ENCODE measurements at regions of chr1 and their contacts with region 1.

Region 1: DNA sequence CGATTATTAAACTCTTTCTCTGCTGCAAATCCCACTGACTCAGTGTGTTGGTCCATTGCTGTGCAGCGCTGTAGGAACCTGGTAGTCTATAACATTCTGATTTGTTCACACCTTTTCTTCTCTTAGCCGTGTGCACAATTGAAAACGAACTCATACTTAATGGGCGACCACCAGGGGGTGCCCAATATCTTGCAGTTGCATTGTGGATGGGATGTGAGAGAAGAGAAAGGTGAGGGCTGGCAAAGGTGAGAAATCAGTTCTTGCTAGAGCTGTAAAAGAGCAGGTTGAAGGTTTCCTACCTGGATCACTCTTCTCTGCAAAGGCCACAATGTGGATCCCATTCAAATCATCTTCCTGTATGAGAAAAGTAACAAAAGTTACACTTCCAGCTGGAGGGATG is 51.0 kb downstream of the CASQ2 start:
- DNase-seq: peak; percentile 15
- ATAC-seq: no peak
- H3K4me3 ChIP-seq: no peak overlapping the region
- H3K27ac ChIP-seq: no peak overlapping the region
- H3K4me1 ChIP-seq: no peaks in the 10 kb centered on the region
- H3K27me3 ChIP-seq: peaks cover 28% of the 10 kb centered on the region
- CTCF ChIP-seq: peak; percentile 35
- POLR2A ChIP-seq: no peak
- RAD21 ChIP-seq: 0 out of 2 replicates have a peak, but pooled peaks have one; percentile 26

Region 2: GRCh38 chr1:115771847-115772457 is 54.4 kb after region 1 on chr1:
- CTCF ChIA-PET with region 1: interaction called, 7 read pairs
- POLR2A ChIA-PET with region 1: no interaction called
- dilution Hi-C with region 1: no loop called
- in situ Hi-C with region 1: no loop called
- intact Hi-C with region 1: loop called (anchors 1 kb)
- DNase-seq: peak; percentile 80
- ATAC-seq: peak; percentile 99
- H3K4me3 ChIP-seq: no peak overlapping the region
- H3K27ac ChIP-seq: no peak overlapping the region
- H3K4me1 ChIP-seq: no peaks in the 10 kb centered on the region
- H3K27me3 ChIP-seq: peaks cover 8% of the 10 kb centered on the region
- CTCF ChIP-seq: peak; percentile 90
- POLR2A ChIP-seq: no peak
- RAD21 ChIP-seq: peak; percentile 85

Region 3: DNA sequence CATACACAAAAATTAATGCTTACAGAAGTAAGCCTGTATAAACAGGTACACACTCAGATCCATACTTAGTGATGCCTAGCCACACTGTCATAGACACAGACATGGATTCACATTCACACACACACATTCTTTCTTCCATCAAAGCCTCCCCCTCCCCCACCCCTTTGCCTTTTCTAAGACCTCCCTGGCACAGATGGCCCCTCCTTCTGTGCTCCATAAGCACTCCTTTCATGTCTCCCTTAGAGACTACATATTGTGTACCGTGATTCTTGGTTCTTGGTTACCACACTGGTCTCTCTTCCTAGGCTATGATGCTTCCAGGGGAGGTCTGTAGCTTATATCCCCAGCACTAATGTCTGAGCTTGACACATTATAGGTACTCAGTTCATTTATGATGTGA is 125.4 kb after region 1 on chr1:
- CTCF ChIA-PET with region 1: no interaction called
- POLR2A ChIA-PET with region 1: no interaction called
- dilution Hi-C with region 1: no loop called
- in situ Hi-C with region 1: no loop called
- intact Hi-C with region 1: no loop called
- DNase-seq: no peak
- ATAC-seq: no peak
- H3K4me3 ChIP-seq: no peak overlapping the region
- H3K27ac ChIP-seq: no peak overlapping the region
- H3K4me1 ChIP-seq: peaks cover 2% of the 10 kb centered on the region; the same call in 1 of the 2 replicates
- H3K27me3 ChIP-seq: peaks cover 40% of the 10 kb centered on the region
- CTCF ChIP-seq: no peak
- POLR2A ChIP-seq: no peak
- RAD21 ChIP-seq: no peak

Region 4: DNA sequence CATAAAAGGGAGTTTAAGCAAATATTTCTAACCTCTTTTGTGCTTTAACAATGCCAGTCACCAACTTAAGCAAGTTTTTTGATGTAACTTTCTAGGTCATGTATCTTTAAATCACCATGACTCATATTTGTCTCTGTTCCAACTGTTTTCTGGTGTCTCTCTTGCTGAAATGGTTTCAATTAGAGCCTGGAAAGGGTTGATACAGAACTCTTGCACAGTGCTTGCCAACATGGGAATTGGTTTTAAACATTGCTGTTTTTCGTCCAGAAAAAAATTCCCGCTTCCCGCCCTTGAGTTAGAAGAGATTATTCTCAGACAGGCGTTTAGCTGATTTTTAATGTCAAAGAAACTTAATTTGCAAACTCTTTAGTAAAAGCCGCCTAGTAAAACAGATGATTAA is 212.3 kb after region 1 on chr1:
- CTCF ChIA-PET with region 1: no interaction called
- POLR2A ChIA-PET with region 1: no interaction called
- dilution Hi-C with region 1: no loop called
- in situ Hi-C with region 1: no loop called
- intact Hi-C with region 1: no loop called
- DNase-seq: peak; percentile 30
- ATAC-seq: no peak
- H3K4me3 ChIP-seq: no peak overlapping the region
- H3K27ac ChIP-seq: no peak overlapping the region
- H3K4me1 ChIP-seq: no peaks in the 10 kb centered on the region
- H3K27me3 ChIP-seq: no peaks in the 10 kb centered on the region; the same call in 1 of the 2 replicates
- CTCF ChIP-seq: no peak
- POLR2A ChIP-seq: no peak
- RAD21 ChIP-seq: no peak